ENCODE measurements at regions of chr14 and their contacts with region 1.

Region 1: GRCh38 chr14:70073924-70074566 is 114.7 kb downstream of the SLC8A3 start:
- H3K4me3 Mint-ChIP-seq: no peak overlapping the region
- H3K27ac Mint-ChIP-seq: no peak overlapping the region
- H3K4me1 Mint-ChIP-seq: no peaks in the 10 kb centered on the region
- H3K27me3 Mint-ChIP-seq: peaks cover 3% of the 10 kb centered on the region

Region 2: GRCh38 chr14:69818757-69819191 is 255.3 kb before region 1 on chr14:
- intact Hi-C with region 1: loop called (anchors 1 kb)
- H3K4me3 Mint-ChIP-seq: no peak overlapping the region
- H3K27ac Mint-ChIP-seq: no peak overlapping the region
- H3K4me1 Mint-ChIP-seq: peaks cover 5% of the 10 kb centered on the region
- H3K27me3 Mint-ChIP-seq: peaks cover 2% of the 10 kb centered on the region

Measured in dendritic cell treated with granulocyte-macrophage colony-stimulating factor and Interleukin-4, amounts not matched to agents 40 ng/mL and 50 ng/mL, for 4 days (primary cell).